Activated naive CD4-positive, alpha-beta T cell treated with anti-CD3 and anti-CD28 coated beads for 36 hours (primary cell): ENCODE measurements at regions of chr20 and their contacts with region 1.

Region 1: GRCh38 chr20:52972190-52972937 is at the start of gene TSHZ2:
- DNase-seq: peak; percentile 73
- H3K4me3 Mint-ChIP-seq: peak within 1 kb of the TSS; percentile 94
- H3K27ac Mint-ChIP-seq: peak within 1 kb of the TSS; percentile 98
- H3K4me1 Mint-ChIP-seq: peaks cover 34% of the 10 kb centered on the region
- H3K27me3 Mint-ChIP-seq: no peaks in the 10 kb centered on the region
- total RNA-seq, gene TSHZ2: 34.1 to 37.8 TPM

Region 2: GRCh38 chr20:52864916-52865605 is 107.3 kb before region 1 on chr20:
- CTCF ChIA-PET with region 1: no interaction called
- intact Hi-C with region 1: loop called (anchors 5 kb)
- DNase-seq: no peak
- H3K4me3 Mint-ChIP-seq: no peak overlapping the region
- H3K27ac Mint-ChIP-seq: no peak overlapping the region
- H3K4me1 Mint-ChIP-seq: peaks cover 24% of the 10 kb centered on the region
- H3K27me3 Mint-ChIP-seq: no peaks in the 10 kb centered on the region

Region 3: GRCh38 chr20:53021934-53022333 is 49.6 kb after region 1 on chr20:
- CTCF ChIA-PET with region 1: no interaction called
- intact Hi-C with region 1: loop called (anchors 1 kb)
- DNase-seq: peak; percentile 64
- H3K4me3 Mint-ChIP-seq: peak overlapping the region; percentile 29
- H3K27ac Mint-ChIP-seq: peak overlapping the region; percentile 93
- H3K4me1 Mint-ChIP-seq: peaks cover 85% of the 10 kb centered on the region
- H3K27me3 Mint-ChIP-seq: no peaks in the 10 kb centered on the region

Region 4: GRCh38 chr20:53070706-53071392 is 98.5 kb after region 1 on chr20:
- CTCF ChIA-PET with region 1: interaction called, 3 read pairs
- intact Hi-C with region 1: loop called (anchors 1 kb)
- DNase-seq: peak; percentile 80
- H3K4me3 Mint-ChIP-seq: peak overlapping the region; percentile 18
- H3K27ac Mint-ChIP-seq: peak overlapping the region; percentile 98
- H3K4me1 Mint-ChIP-seq: peaks cover 63% of the 10 kb centered on the region
- H3K27me3 Mint-ChIP-seq: no peaks in the 10 kb centered on the region

Region 5: DNA sequence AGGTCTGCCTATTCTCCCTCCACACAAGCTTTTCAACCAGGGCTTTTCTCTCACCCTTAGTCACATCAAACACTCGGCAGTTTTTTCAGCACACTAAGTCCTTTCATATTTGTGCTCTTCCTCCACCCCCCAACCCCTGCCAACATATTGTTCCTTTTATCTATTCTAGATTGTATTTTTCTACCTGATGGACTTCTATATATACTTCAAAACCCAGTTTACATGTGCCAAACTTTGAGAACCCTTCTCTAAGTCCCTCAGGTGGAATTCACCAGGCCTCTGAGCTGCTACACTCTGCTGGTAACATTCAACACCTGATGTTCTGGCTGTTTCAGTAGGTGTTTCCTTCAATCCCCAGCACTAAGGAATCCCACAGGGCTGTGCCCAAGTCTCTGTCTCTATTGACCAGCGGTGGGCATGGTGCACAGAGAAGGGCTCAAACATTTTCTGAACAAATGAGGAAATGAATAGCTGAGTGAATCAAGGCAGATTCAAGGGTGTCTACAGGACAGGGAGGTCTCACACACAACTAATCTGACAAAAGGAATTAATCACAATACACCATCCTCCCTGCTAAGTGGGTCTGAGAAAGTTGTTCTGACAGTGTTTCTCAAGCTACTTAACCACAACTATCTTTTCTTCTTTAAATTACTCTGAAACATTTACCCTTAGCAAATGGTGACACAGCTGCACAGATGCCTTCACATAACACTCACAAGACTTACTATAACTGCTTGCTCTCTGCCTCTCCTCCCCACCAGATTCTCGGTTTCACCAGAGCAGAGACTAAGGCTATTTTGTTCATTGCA is 166.3 kb after region 1 on chr20:
- CTCF ChIA-PET with region 1: no interaction called
- intact Hi-C with region 1: loop called (anchors 2 kb)
- DNase-seq: peak; percentile 62
- H3K4me3 Mint-ChIP-seq: no peak overlapping the region
- H3K27ac Mint-ChIP-seq: peak overlapping the region; percentile 87
- H3K4me1 Mint-ChIP-seq: peaks cover 56% of the 10 kb centered on the region
- H3K27me3 Mint-ChIP-seq: no peaks in the 10 kb centered on the region

Region 6: GRCh38 chr20:53594068-53595017 is 622.0 kb after region 1 on chr20:
- CTCF ChIA-PET with region 1: no interaction called
- intact Hi-C with region 1: loop called (anchors 5 kb)
- DNase-seq: peak; percentile 96
- H3K4me3 Mint-ChIP-seq: peak overlapping the region; percentile 94
- H3K27ac Mint-ChIP-seq: peak overlapping the region; percentile 99
- H3K4me1 Mint-ChIP-seq: peaks cover 51% of the 10 kb centered on the region
- H3K27me3 Mint-ChIP-seq: no peaks in the 10 kb centered on the region